ENCODE measurements at regions of chr16 and their contacts with region 1.

Region 1: DNA sequence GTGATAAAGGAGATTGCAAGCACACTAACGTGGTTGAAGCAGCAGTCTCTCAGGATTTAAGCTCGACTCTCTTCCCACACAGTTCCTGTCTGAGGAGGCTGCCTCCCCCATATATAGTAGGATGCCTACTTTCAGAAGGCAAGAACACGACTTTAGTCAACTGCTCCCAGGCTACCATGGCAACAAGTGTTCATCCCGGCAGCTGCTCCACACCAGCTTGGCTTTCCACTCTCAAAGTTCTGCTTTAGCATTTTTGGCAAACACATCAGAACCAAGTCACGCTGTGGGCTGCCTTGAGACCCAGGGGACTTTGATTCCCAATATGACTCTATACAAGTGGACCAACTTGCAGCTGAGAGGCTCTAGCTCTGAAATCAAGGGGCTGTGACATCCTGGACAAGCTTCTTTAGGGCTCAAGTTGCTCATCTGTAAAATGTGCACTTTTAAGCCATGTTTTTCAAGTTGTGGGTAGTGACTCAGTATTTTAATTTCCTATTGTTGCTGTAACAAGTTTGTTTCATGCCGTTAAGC is 16.5 kb downstream of the ZP2 start:
- ATAC-seq: peak in 2 of 8 experiments; percentile 63 to 74
- H3K4me3 ChIP-seq: no peak overlapping the region
- H3K27ac ChIP-seq: no peak overlapping the region
- H3K4me1 ChIP-seq: no peaks in the 10 kb centered on the region

Region 2: GRCh38 chr16:21101631-21102420 is 93.0 kb before region 1 on chr16:
- in situ Hi-C with region 1: no loop called
- ATAC-seq: peak in 4 of 8 experiments; percentile 42 to 59 (median 50)
- H3K4me3 ChIP-seq: no peak overlapping the region
- H3K27ac ChIP-seq: no peak overlapping the region
- H3K4me1 ChIP-seq: peaks cover 3 to 7% of the 10 kb centered on the region in 2 donors

Region 3: GRCh38 chr16:21277927-21278706 is 83.3 kb after region 1 on chr16 and contains the start of gene CRYM:
- in situ Hi-C with region 1: loop called in 2 of 9 experiments (anchors 25 kb)
- ATAC-seq: peak; percentile 88 to 99 (median 99)
- H3K4me3 ChIP-seq: peak within 1 kb of the TSS; percentile 30 to 56 (median 41)
- H3K27ac ChIP-seq: no peak within 1 kb of the TSS
- H3K4me1 ChIP-seq: no peaks in the 10 kb centered on the region
- total RNA-seq, gene CRYM: 0.55 to 66.7 (median 1.7) TPM in 7 of 8 experiments, not detected in the other

Region 4: GRCh38 chr16:22346483-22346882 is 1151.6 kb after region 1 on chr16:
- in situ Hi-C with region 1: loop called in 1 of 9 experiments (anchors 25 kb)
- ATAC-seq: no peak
- H3K4me3 ChIP-seq: no peak overlapping the region
- H3K27ac ChIP-seq: no peak overlapping the region
- H3K4me1 ChIP-seq: no peaks in the 10 kb centered on the region